ENCODE measurements at regions of chr5 and their contacts with region 1.

Region 1: GRCh38 chr5:96336351-96336985 is 96.6 kb downstream of the PCSK1 start:
- DNase-seq: peak; percentile 20 to 57 (median 51)
- H3K4me3 ChIP-seq: no peak overlapping the region
- H3K4me3 Mint-ChIP-seq: no peak overlapping the region
- H3K27ac ChIP-seq: no peak overlapping the region
- H3K27ac Mint-ChIP-seq: no peak overlapping the region
- H3K4me1 ChIP-seq: no peaks in the 10 kb centered on the region
- H3K4me1 Mint-ChIP-seq: no peaks in the 10 kb centered on the region
- H3K27me3 ChIP-seq: no peaks in the 10 kb centered on the region
- H3K27me3 Mint-ChIP-seq: peaks cover 5 to 27% of the 10 kb centered on the region in 2 donors

Region 2: GRCh38 chr5:96157841-96158291 is 178.6 kb before region 1 on chr5:
- CTCF ChIA-PET with region 1: no interaction called
- POLR2A ChIA-PET with region 1: no interaction called
- DNase-seq: no peak
- H3K4me3 ChIP-seq: no peak overlapping the region
- H3K4me3 Mint-ChIP-seq: no peak overlapping the region
- H3K27ac ChIP-seq: no peak overlapping the region
- H3K27ac Mint-ChIP-seq: peak overlapping the region in 1 of 8 donors; percentile 2
- H3K4me1 ChIP-seq: no peaks in the 10 kb centered on the region
- H3K4me1 Mint-ChIP-seq: no peaks in the 10 kb centered on the region
- H3K27me3 ChIP-seq: no peaks in the 10 kb centered on the region
- H3K27me3 Mint-ChIP-seq: peaks cover 8 to 15% of the 10 kb centered on the region in 2 donors

Region 3: DNA sequence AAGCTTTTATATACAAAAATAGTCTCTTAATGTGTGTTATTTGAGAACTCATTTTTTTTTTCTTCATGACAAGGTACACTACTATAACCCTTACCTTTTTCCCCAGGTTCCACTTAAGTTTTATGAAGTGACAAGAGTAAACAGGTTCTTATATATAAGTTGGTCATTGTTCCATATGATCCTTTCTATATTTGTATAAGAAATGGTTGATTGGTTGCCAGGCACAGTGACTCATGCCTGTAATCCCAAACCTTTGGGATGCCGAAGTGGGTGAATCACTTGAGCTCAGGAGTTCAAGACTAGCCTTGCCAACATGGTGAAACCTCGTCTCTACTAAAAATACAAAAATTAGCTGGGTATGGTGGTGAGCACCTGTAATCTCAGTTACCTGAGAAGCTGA is 11.8 kb before region 1 on chr5:
- CTCF ChIA-PET with region 1: interaction called, 15 read pairs
- POLR2A ChIA-PET with region 1: no interaction called
- DNase-seq: no peak
- H3K4me3 ChIP-seq: no peak overlapping the region
- H3K4me3 Mint-ChIP-seq: no peak overlapping the region
- H3K27ac ChIP-seq: no peak overlapping the region
- H3K27ac Mint-ChIP-seq: no peak overlapping the region
- H3K4me1 ChIP-seq: no peaks in the 10 kb centered on the region
- H3K4me1 Mint-ChIP-seq: no peaks in the 10 kb centered on the region
- H3K27me3 ChIP-seq: no peaks in the 10 kb centered on the region
- H3K27me3 Mint-ChIP-seq: peaks cover 9 to 12% of the 10 kb centered on the region in 2 donors

Measured in CD8-positive, alpha-beta memory T cell (primary cell).